ENCODE measurements at regions of chr9 and their contacts with region 1.

Region 1: GRCh38 chr9:36328798-36329411 is 70.7 kb upstream of the GNE start:
- DNase-seq: peak; percentile 79
- H3K4me3 ChIP-seq: no peak overlapping the region
- H3K27ac ChIP-seq: no peak overlapping the region
- H3K4me1 ChIP-seq: peaks cover 10% of the 10 kb centered on the region
- H3K27me3 ChIP-seq: no peaks in the 10 kb centered on the region
- CTCF ChIP-seq: peak; percentile 77

Region 2: GRCh38 chr9:35903049-35903448 is 425.9 kb before region 1 on chr9:
- intact Hi-C with region 1: no loop called
- DNase-seq: peak; percentile 66
- H3K4me3 ChIP-seq: no peak overlapping the region
- H3K27ac ChIP-seq: no peak overlapping the region
- H3K4me1 ChIP-seq: peaks cover 25% of the 10 kb centered on the region
- H3K27me3 ChIP-seq: no peaks in the 10 kb centered on the region
- CTCF ChIP-seq: peak; percentile 70

Region 3: GRCh38 chr9:36245906-36246305 is 83.0 kb before region 1 on chr9:
- intact Hi-C with region 1: loop called (anchors 5 kb)
- DNase-seq: no peak
- H3K4me3 ChIP-seq: no peak overlapping the region
- H3K27ac ChIP-seq: no peak overlapping the region
- H3K4me1 ChIP-seq: no peaks in the 10 kb centered on the region
- H3K27me3 ChIP-seq: no peaks in the 10 kb centered on the region
- CTCF ChIP-seq: no peak

Region 4: DNA sequence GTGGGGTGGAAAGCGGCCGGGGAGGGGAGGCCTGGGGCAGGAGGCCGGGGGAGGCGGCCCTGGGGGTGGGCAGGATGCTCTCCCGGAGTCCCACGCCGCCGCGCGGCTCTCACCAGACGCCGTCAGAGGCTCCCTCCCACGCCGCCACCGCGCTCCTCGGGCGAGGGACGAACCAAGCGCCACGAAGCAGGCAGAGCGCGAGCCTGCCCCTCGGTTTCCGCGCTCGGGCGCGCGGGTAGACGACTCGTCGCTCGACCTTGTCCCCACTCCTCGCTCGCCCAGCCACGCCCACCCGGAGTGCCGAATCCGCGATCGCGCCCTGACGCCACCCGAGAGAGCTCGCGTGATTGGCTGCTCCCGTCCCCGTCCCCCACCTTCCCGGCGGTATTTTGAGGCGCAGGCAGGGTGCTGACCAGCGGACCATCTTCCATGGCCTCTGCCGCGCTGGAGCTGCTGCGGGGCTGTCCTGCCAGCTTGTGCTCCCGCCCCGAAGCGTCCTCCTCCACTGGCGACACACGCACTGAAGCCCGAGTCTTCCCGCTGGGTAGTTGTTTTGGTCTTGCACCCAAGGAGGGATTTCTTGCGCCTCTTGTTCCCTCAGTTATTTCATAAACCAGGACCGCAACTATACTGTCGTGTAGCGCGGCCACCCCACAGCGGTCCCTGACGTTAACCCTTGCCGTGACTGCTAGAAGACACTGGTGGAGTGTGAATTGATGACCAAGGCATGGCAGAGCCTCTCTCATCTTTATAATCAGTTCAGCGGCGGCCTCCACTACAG is 70.5 kb before region 1 on chr9 and contains the start of gene GNE:
- intact Hi-C with region 1: loop called (anchors 5 kb)
- DNase-seq: peak; percentile 98
- H3K4me3 ChIP-seq: peak within 1 kb of the TSS; percentile 76
- H3K27ac ChIP-seq: peak within 1 kb of the TSS; percentile 99
- H3K4me1 ChIP-seq: peaks cover 3% of the 10 kb centered on the region
- H3K27me3 ChIP-seq: no peaks in the 10 kb centered on the region
- CTCF ChIP-seq: no peak
- total RNA-seq, gene GNE: 150 to 190 TPM

Measured in colonic mucosa (tissue), 4 donors.